ENCODE measurements at regions of chr1 and their contacts with region 1.

Region 1: DNA sequence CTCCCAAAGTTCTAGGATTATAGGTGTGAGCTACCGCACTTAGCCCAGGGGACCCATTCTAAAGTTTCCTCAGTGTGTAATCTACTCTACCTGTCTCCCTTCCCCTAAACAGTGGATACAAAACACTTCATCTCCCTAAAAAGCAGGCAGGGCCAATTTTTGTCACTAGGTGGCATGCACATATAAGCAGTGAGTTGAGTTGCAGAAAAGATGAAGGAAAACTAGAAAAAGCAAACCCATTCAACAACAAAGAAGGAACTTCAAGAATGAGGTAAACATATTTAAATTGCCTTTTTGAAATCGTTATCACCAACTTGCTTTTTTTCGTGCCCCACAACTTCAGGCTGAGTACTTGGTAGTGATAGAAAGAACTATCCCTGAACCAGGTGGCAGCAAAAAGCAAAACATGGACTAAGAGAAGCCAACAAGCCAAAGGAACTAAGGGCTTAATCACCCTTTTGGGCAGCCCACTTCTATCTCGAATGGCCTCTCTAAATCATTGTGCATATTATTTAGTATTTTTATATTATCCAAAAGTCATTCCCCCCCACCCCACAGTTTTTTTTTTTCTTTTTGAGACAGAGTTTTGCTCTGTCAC is 19.7 kb upstream of the ALDH9A1 start:
- DNase-seq: peak; percentile 57
- CTCF ChIP-seq: peak; percentile 82

Region 2: GRCh38 chr1:165842671-165843129 is 124.7 kb after region 1 on chr1:
- in situ Hi-C with region 1: no loop called
- DNase-seq: no peak
- CTCF ChIP-seq: no peak

Region 3: GRCh38 chr1:165907256-165907857 is 189.3 kb after region 1 on chr1:
- in situ Hi-C with region 1: loop called (anchors 5 kb)
- DNase-seq: no peak
- CTCF ChIP-seq: no peak